Lower leg skin (tissue), 4 donors: ENCODE measurements at regions of chr7 and their contacts with region 1.

Region 1: DNA sequence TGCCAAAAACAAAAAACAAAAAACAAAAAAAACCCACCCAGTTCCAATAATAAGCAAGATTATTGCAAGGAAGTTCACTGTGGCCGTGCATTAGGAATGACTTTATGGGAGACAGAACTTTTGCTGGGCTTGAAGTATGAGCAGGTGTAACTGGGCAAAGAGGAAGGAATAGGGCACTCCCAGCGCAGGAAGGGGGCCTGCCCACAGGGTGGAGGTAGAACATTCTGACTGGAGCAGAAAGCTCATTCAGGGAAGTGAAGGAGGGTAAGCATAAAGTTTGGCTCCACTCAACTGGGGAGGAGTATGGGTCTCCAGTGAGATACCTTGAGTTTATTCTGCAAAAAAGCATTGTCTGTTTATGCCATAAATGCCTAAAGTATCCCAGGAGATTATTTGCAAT is 42.1 kb upstream of the WIPF3 start:
- DNase-seq: no peak
- H3K4me3 ChIP-seq: no peak overlapping the region
- CTCF ChIP-seq: no peak
- POLR2A ChIP-seq: no peak

Region 2: GRCh38 chr7:29135846-29136245 is 628.4 kb before region 1 on chr7:
- intact Hi-C with region 1: no loop called
- DNase-seq: no peak
- H3K4me3 ChIP-seq: no peak overlapping the region
- CTCF ChIP-seq: no peak
- POLR2A ChIP-seq: no peak

Region 3: DNA sequence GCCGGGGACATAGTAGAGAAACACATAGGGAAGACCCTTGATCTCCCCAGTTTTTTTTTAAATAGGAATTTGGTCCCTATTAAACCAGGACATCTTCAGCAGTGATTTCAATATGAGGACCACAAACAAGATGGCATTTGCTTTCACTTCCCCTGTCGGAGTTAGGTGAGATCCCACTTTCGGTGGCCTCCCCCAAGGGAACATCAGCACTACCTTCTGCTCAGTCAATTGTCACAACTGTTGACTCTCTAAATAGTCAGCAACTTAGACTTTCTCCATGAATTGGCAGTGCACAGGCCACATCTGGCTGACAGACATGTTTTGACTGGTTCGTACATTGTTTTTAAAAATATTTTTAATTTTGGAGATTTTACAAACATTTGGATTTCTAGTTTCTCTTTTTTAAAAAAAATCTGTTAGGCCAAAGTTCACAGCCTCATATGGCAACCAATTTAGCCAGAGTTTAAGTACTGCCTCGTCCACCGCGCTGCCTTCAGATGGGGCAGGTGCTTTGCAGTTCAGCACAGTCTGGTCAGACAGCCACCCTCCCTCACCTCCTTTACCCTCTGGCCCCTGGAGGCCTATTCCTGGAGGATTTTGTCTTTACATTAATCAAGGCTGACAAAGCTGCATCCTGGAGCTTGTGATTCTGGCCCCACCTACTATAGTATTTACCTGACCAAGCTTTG is 339.8 kb before region 1 on chr7:
- intact Hi-C with region 1: no loop called
- DNase-seq: peak in 1 of 2 donors; percentile 23
- H3K4me3 ChIP-seq: no peak overlapping the region
- CTCF ChIP-seq: no peak
- POLR2A ChIP-seq: no peak

Region 4: DNA sequence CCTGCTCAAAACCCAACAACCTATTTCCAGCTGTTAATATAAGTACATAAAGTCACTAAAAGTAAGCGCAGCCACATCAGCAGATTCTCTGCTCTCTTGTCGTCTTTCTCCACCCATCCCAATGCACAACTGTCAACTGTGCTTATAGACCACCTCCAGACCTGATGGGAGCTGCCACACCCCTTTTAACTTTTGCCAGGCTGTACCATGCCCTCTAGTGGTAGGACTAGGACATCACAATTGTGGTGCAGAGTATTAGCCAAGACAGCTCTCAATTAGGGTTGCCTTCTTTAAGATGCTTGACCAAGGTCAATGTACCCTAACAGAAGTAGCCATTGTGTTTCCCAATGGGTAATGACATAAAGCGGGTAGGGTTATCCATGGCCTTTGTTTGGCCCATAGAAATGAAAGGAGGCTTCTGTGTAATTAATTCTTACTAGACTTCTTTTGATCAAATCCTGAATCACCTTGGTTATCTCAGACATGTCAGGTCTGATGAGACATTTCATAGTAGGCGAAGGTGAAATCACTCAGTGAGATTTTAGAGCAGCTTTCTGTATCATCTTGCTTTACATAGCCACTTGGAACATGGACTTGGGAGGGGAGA is 157.3 kb after region 1 on chr7:
- intact Hi-C with region 1: loop called (anchors 10 kb)
- DNase-seq: peak in 1 of 2 donors; percentile 37
- H3K4me3 ChIP-seq: no peak overlapping the region
- CTCF ChIP-seq: no peak
- POLR2A ChIP-seq: no peak